CD4-positive, alpha-beta memory T cell (primary cell): ENCODE measurements at regions of chr15 and their contacts with region 1.

Region 1: GRCh38 chr15:38354315-38354929 is 99.5 kb upstream of the FAM98B start:
- DNase-seq: peak; percentile 36 to 48 (median 47)
- H3K4me3 ChIP-seq: no peak overlapping the region
- H3K4me3 Mint-ChIP-seq: no peak overlapping the region
- H3K27ac ChIP-seq: no peak overlapping the region
- H3K27ac Mint-ChIP-seq: no peak overlapping the region
- H3K4me1 ChIP-seq: no peaks in the 10 kb centered on the region
- H3K4me1 Mint-ChIP-seq: no peaks in the 10 kb centered on the region
- H3K27me3 ChIP-seq: no peaks in the 10 kb centered on the region
- H3K27me3 Mint-ChIP-seq: peaks cover 5 to 8% of the 10 kb centered on the region in 2 donors

Region 2: DNA sequence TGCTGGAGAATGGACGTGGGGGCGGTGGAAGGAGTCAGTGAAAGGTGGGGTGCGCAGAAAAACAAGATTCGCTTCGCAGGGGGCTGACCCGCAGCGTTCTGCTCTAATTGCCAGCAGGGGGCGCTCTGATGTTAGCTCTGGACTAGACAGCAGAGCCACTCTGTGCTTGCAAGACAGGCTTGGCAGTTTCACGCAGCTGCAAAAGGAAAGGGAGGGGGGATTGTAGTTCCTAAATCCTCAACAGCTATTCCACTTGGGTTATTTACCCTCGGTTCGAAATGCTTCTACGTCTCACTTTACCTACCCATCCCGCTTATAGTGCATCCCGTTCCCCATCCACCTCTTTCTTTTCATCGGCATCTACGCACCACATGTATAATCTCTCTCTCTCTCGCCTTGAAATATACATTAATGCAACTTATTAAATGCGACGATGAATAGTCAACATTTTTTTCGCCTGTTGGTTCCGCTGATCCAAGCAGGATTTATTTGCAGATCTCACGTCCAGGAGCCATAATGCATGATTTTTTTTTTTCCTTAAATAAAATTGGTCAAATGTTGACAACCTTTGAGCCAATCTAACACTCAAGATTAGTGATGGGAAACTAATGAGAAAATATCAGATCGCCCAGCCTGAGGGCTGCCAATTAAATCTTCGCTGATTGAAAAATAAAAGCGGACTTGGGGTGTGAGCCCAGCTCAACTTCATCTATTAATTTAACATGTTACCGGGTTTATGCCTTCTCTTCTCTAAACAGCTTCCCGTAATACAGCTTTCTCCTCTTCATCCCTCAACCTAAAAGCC is 1470.5 kb before region 1 on chr15:
- CTCF ChIA-PET with region 1: no interaction called
- POLR2A ChIA-PET with region 1: no interaction called
- intact Hi-C with region 1: loop called (anchors 5 kb)
- DNase-seq: peak in 4 of 5 donors; percentile 9 to 23 (median 14)
- H3K4me3 ChIP-seq: no peak overlapping the region
- H3K4me3 Mint-ChIP-seq: peak overlapping the region in 2 of 8 donors; percentile 14 to 55
- H3K27ac ChIP-seq: no peak overlapping the region
- H3K27ac Mint-ChIP-seq: peak overlapping the region in 1 of 7 donors; percentile 42
- H3K4me1 ChIP-seq: peaks cover 4% of the 10 kb centered on the region
- H3K4me1 Mint-ChIP-seq: peaks cover 11 to 17% (median 13%) of the 10 kb centered on the region in 4 donors
- H3K27me3 ChIP-seq: peaks cover 49% of the 10 kb centered on the region
- H3K27me3 Mint-ChIP-seq: peaks cover 61 to 81% of the 10 kb centered on the region in 2 donors

Region 3: DNA sequence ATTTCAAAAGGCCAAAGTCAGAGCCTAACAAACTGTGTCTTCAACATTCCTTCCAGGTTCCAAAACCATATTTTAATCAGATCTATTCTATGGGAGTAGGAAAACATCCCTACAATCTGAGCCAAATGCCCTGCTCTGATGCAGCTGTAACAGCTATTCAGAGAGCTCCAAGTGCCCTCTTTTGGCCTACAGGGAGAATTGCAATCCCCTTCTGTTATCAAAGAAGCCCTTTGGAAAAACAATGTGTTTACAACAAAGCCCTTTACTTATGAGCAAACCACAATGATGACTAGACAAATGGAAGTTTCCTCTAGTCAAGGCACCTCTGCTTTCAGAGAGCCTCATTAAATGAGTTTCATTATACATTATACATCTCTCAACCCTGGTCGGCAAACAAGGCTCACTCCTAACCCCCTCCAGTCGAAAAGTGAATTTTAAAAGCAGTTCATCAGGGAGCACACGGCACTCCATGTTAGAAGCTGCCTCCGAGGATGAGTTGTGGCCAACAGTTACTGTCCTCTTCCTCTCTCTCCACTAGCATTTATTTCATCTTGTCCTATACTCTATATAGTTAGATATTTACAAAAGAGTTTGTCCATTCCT is 462.6 kb before region 1 on chr15:
- CTCF ChIA-PET with region 1: no interaction called
- POLR2A ChIA-PET with region 1: no interaction called
- intact Hi-C with region 1: loop called (anchors 2 kb)
- DNase-seq: no peak
- H3K4me3 ChIP-seq: no peak overlapping the region
- H3K4me3 Mint-ChIP-seq: no peak overlapping the region
- H3K27ac ChIP-seq: no peak overlapping the region
- H3K27ac Mint-ChIP-seq: no peak overlapping the region
- H3K4me1 ChIP-seq: no peaks in the 10 kb centered on the region
- H3K4me1 Mint-ChIP-seq: no peaks in the 10 kb centered on the region
- H3K27me3 ChIP-seq: no peaks in the 10 kb centered on the region
- H3K27me3 Mint-ChIP-seq: no peaks in the 10 kb centered on the region

Region 4: GRCh38 chr15:38017721-38018120 is 336.7 kb before region 1 on chr15:
- CTCF ChIA-PET with region 1: no interaction called
- POLR2A ChIA-PET with region 1: no interaction called
- intact Hi-C with region 1: no loop called
- DNase-seq: no peak
- H3K4me3 ChIP-seq: no peak overlapping the region
- H3K4me3 Mint-ChIP-seq: no peak overlapping the region
- H3K27ac ChIP-seq: no peak overlapping the region
- H3K27ac Mint-ChIP-seq: no peak overlapping the region
- H3K4me1 ChIP-seq: no peaks in the 10 kb centered on the region
- H3K4me1 Mint-ChIP-seq: no peaks in the 10 kb centered on the region
- H3K27me3 ChIP-seq: no peaks in the 10 kb centered on the region
- H3K27me3 Mint-ChIP-seq: peaks cover 0 to 3% of the 10 kb centered on the region in 2 donors